Transverse colon (tissue), 4 donors: ENCODE measurements at regions of chr19 and their contacts with region 1.

Region 1: GRCh38 chr19:984165-984967 is at the start of gene WDR18:
- DNase-seq: peak; percentile 94
- H3K4me3 ChIP-seq: peak within 1 kb of the TSS; percentile 69 to 100 (median 76)
- H3K27ac ChIP-seq: peak within 1 kb of the TSS; percentile 83 to 94 (median 88)
- H3K4me1 ChIP-seq: peaks cover 11 to 27% (median 22%) of the 10 kb centered on the region in 4 donors
- H3K27me3 ChIP-seq: peaks cover 2% of the 10 kb centered on the region
- CTCF ChIP-seq: peak; percentile 23 to 44 (median 35)
- EP300 ChIP-seq: no peak
- POLR2A ChIP-seq: peak; percentile 56
- total RNA-seq, gene WDR18: 23.1 to 47.4 (median 39.0) TPM

Region 2: DNA sequence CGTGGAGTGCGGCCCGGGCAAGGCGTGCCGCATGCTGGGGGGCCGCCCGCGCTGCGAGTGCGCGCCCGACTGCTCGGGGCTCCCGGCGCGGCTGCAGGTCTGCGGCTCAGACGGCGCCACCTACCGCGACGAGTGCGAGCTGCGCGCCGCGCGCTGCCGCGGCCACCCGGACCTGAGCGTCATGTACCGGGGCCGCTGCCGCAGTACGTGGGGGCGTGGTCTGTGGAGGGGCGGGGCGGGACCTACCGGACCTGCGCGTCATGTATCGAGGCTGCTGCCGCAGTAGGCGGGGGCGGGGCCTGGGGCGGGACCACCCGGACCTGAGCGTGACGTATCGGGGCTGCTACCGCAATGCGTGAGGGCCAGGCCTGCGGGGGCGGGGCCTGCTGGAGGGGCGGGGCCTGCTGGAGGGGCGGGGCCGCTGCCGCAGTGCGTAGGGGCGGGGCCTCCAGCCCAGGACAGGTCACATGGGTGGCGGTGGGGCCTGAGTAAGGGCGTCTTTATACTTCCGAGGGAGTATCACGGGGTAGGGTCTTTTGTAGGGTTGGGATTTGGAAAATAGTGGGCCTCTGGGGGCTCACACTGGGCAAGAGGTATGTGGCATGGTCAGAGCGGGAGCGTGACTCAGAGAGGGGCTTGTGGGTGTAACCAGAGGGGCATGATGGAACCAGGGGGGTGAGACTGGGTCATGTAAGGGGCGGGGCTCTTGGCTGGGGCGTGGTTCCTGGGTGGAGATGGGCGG is 303.9 kb before region 1 on chr19:
- in situ Hi-C with region 1: no loop called
- intact Hi-C with region 1: no loop called
- DNase-seq: peak; percentile 100
- H3K4me3 ChIP-seq: peak overlapping the region; percentile 50 to 94 (median 87)
- H3K27ac ChIP-seq: peak overlapping the region; percentile 94 to 99 (median 97)
- H3K4me1 ChIP-seq: peaks cover 7 to 32% (median 24%) of the 10 kb centered on the region in 4 donors
- H3K27me3 ChIP-seq: peaks cover 22% of the 10 kb centered on the region
- CTCF ChIP-seq: peak in 4 of 5 experiments; percentile 27 to 59 (median 30)
- EP300 ChIP-seq: no peak
- POLR2A ChIP-seq: peak; percentile 57

Region 3: DNA sequence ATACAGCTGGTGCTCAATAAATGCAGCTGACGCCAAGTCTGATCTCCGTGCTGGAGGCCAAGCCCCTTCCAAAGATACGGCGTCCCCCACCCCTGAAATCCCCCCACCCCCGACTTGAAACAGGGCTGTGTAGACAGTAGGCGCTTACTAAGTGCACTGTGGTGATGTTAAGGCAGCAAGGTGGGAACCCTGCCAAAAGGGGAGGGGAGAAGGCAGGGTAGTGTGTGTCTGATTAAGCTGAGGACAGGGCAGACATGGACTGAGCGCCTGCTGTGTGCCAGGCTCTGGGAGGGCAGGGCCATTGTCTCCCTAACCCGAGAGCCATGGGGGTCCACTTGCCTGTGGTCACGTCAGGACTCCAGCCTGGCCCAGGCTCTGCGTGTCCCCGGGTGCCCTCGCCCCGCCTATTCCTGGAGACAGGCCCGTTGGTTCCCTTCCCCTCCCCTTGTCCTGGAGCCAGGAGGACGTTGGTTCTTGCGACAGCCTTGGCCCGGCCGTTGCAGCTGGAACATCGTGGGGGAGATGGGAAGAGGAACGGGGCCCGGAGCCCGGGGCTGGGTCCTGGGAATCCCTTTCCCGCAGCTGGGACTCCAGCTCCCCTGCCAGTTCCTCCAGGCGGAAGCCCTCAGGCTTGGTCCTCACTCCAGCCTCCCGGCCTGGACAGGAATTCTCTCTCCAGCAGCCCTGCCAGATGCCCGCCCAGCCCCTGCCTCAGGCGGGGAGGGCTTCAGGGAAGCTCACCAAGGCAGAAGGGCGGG is 134.0 kb before region 1 on chr19:
- in situ Hi-C with region 1: loop called in 2 of 4 experiments (anchors 10 to 25 kb)
- intact Hi-C with region 1: loop called (anchors 5 kb)
- DNase-seq: peak; percentile 82
- H3K4me3 ChIP-seq: no peak overlapping the region
- H3K27ac ChIP-seq: peak overlapping the region; percentile 62 to 87 (median 78)
- H3K4me1 ChIP-seq: peaks cover 0 to 13% (median 3%) of the 10 kb centered on the region in 4 donors
- H3K27me3 ChIP-seq: peaks cover 78% of the 10 kb centered on the region
- CTCF ChIP-seq: no peak
- EP300 ChIP-seq: peak; percentile 89
- POLR2A ChIP-seq: no peak

Region 4: DNA sequence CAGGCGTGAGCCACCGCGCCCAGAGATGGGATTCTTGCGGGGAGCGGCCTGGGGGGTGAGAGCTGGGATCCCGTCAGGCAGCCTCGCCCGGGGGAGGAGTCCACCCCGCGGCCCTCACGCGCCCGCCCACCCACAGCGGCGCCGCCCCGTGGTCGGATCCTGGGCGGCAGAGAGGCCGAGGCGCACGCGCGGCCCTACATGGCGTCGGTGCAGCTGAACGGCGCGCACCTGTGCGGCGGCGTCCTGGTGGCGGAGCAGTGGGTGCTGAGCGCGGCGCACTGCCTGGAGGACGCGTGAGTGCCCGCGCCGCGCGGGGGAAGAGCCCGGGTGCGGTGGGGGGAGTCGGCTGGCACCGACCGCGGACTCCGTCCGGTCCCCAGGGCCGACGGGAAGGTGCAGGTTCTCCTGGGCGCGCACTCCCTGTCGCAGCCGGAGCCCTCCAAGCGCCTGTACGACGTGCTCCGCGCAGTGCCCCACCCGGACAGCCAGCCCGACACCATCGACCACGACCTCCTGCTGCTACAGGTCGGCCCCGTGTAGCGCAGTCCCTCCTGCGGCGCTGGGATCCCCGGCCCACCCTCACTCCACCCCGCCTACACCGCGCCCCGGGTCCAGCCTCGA is 123.8 kb before region 1 on chr19:
- in situ Hi-C with region 1: loop called in 2 of 4 experiments (anchors 10 to 25 kb)
- intact Hi-C with region 1: loop called (anchors 5 kb)
- DNase-seq: peak; percentile 84
- H3K4me3 ChIP-seq: peak overlapping the region; percentile 9 to 45 (median 35)
- H3K27ac ChIP-seq: peak overlapping the region; percentile 62 to 75 (median 70)
- H3K4me1 ChIP-seq: peaks cover 6 to 46% (median 41%) of the 10 kb centered on the region in 4 donors
- H3K27me3 ChIP-seq: peaks cover 37% of the 10 kb centered on the region
- CTCF ChIP-seq: peak in 2 of 5 experiments; percentile 17 to 31
- EP300 ChIP-seq: no peak
- POLR2A ChIP-seq: peak; percentile 12